ENCODE measurements at regions of chr5 and their contacts with region 1.

Region 1: DNA sequence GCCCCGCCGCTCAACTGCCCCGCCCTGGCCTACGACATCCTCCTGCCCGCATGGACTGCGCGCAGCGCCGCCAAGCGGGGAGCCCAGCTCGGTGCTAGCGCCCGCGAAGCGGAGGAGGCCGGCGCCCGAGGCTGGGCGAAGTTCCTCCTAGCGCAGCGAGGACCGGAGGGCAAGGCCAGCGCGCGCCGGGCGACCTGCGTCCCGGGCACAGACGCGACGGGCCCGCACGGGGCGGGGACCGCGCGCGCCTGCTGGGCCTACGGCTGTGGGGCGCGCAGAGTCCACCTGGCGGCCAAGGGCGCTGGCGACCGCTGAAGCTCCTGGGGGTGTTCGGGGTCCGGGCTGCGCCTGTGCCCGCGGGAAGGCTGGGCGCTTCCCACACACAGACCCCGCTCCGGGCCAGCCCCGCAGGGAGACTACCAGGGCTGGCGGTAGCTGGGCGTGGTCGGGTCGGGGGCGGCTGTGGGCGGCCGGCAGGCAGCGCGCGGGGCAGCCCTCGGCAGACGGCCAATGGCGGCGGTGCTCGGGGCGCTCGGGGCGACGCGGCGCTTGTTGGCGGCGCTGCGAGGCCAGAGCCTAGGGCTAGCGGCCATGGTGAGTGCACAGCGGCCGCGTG is at the start of gene PCBD2:
- DNase-seq: peak; percentile 93
- H3K27ac ChIP-seq: peak within 1 kb of the TSS; percentile 100
- CTCF ChIP-seq: peak; percentile 99

Region 2: GRCh38 chr5:134825212-134825611 is 79.5 kb before region 1 on chr5:
- CTCF ChIA-PET with region 1: no interaction called
- POLR2A ChIA-PET with region 1: no interaction called
- DNase-seq: no peak
- H3K27ac ChIP-seq: no peak overlapping the region
- CTCF ChIP-seq: no peak

Region 3: GRCh38 chr5:134891473-134891872 is 13.3 kb before region 1 on chr5:
- CTCF ChIA-PET with region 1: interaction called, 14 read pairs
- POLR2A ChIA-PET with region 1: no interaction called
- DNase-seq: no peak
- H3K27ac ChIP-seq: no peak overlapping the region
- CTCF ChIP-seq: no peak

Region 4: GRCh38 chr5:135482381-135482933 is 577.7 kb after region 1 on chr5:
- CTCF ChIA-PET with region 1: no interaction called
- POLR2A ChIA-PET with region 1: no interaction called
- DNase-seq: no peak
- H3K27ac ChIP-seq: no peak overlapping the region
- CTCF ChIP-seq: no peak